Prostate gland (tissue), 2 donors: ENCODE measurements at regions of chr4 and their contacts with region 1.

Region 1: GRCh38 chr4:152500800-152501434 is 35.0 kb downstream of the FBXW7 start:
- DNase-seq: peak; percentile 83
- H3K4me3 ChIP-seq: no peak overlapping the region
- H3K27ac ChIP-seq: no peak overlapping the region
- H3K4me1 ChIP-seq: no peaks in the 10 kb centered on the region
- H3K27me3 ChIP-seq: no peaks in the 10 kb centered on the region
- CTCF ChIP-seq: peak in 3 of 4 experiments; percentile 70 to 83 (median 75)
- POLR2A ChIP-seq: no peak

Region 2: DNA sequence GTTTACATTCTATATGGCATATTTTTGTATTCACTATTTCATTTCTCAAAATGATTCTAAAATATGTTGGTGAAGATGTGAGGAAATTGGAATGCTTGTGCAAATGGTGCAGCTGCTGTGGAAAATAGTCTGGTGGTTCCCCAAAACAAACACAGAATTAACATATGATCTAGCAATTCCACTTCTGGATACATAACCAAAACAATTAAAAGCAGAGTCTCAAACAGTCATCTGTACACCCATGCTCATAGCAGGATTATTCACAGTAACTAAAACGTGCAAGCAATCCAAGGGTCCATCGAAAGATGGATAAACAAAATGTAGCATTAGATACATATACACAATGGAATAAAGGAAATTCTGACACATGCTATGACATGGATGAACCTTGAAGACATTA is 169.9 kb before region 1 on chr4:
- intact Hi-C with region 1: no loop called
- DNase-seq: no peak
- H3K4me3 ChIP-seq: no peak overlapping the region
- H3K27ac ChIP-seq: no peak overlapping the region
- H3K4me1 ChIP-seq: no peaks in the 10 kb centered on the region
- H3K27me3 ChIP-seq: no peaks in the 10 kb centered on the region
- CTCF ChIP-seq: no peak
- POLR2A ChIP-seq: no peak

Region 3: GRCh38 chr4:152640058-152640833 is 139.3 kb after region 1 on chr4:
- intact Hi-C with region 1: loop called (anchors 2 kb)
- DNase-seq: no peak
- H3K4me3 ChIP-seq: no peak overlapping the region
- H3K27ac ChIP-seq: no peak overlapping the region
- H3K4me1 ChIP-seq: no peaks in the 10 kb centered on the region
- H3K27me3 ChIP-seq: no peaks in the 10 kb centered on the region
- CTCF ChIP-seq: peak; percentile 29 to 76 (median 66)
- POLR2A ChIP-seq: no peak

Region 4: GRCh38 chr4:152735396-152735859 is 234.5 kb after region 1 on chr4:
- intact Hi-C with region 1: loop called (anchors 10 kb)
- DNase-seq: no peak
- H3K4me3 ChIP-seq: no peak overlapping the region
- H3K27ac ChIP-seq: no peak overlapping the region
- H3K4me1 ChIP-seq: no peaks in the 10 kb centered on the region
- H3K27me3 ChIP-seq: no peaks in the 10 kb centered on the region
- CTCF ChIP-seq: peak in 3 of 4 experiments; percentile 43 to 70 (median 69)
- POLR2A ChIP-seq: no peak